Heart left ventricle (tissue), 16 donors: ENCODE measurements at regions of chr20 and their contacts with region 1.

Region 1: GRCh38 chr20:23350196-23350903 is at the start of gene NXT1:
- DNase-seq: peak; percentile 97 to 98 (median 97)
- ATAC-seq: peak; percentile 93 to 96 (median 94)
- H3K4me3 ChIP-seq: peak within 1 kb of the TSS; percentile 63 to 98 (median 90)
- H3K27ac ChIP-seq: peak within 1 kb of the TSS; percentile 93 to 100 (median 98)
- H3K4me1 ChIP-seq: peaks cover 4 to 27% (median 18%) of the 10 kb centered on the region in 12 donors
- H3K27me3 ChIP-seq: no peaks in the 10 kb centered on the region
- CTCF ChIP-seq: no peak
- POLR2A ChIP-seq: peak; percentile 53 to 77
- total RNA-seq, gene NXT1: 4.2 to 13.8 (median 9.1) TPM

Region 2: DNA sequence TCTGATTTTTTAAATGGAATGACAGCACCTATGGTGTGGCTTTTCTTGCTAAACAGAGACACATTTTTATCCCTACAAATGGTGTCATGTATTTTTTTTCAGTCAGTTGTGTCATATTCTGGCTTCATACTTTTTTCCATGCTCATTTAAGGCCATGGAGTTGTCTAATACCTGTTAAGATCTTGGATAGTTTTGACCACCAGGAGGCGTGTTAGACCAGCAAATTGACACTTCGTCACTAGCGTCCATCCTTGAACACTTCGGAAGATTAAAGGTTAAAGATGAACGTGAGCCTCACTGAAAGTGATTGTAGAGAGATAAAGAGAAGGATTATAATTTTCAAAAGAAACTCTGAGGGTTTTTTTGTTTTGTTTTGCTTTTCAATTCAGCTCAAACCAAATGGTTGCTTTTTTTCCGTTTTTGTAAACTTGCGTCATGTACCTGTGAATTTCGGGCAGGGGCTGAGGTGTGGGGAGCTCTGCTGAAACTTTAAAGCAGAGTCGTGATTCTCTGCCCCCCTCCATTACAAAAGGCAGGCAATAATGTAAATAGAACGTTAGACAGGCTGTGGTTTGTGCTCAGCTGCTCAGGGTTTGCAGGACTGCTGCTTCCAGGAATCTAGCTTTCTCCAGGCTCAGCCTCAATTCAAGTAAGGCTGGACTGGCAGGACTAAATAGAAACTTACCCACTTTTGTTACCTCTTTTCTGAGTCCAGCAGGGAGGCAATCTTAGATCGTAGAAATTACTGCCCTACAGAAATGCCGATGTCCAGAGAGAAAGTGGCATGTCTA is 1011.1 kb before region 1 on chr20:
- intact Hi-C with region 1: loop called in 3 of 10 experiments (anchors 5 to 10 kb)
- DNase-seq: peak in 1 of 5 donors; percentile 31
- ATAC-seq: peak in 3 of 4 donors; percentile 34 to 59 (median 55)
- H3K4me3 ChIP-seq: no peak overlapping the region
- H3K27ac ChIP-seq: no peak overlapping the region
- H3K4me1 ChIP-seq: no peaks in the 10 kb centered on the region
- H3K27me3 ChIP-seq: peaks cover 0 to 57% (median 7%) of the 10 kb centered on the region in 9 donors
- CTCF ChIP-seq: peak; percentile 49 to 85 (median 73)
- POLR2A ChIP-seq: no peak

Region 3: DNA sequence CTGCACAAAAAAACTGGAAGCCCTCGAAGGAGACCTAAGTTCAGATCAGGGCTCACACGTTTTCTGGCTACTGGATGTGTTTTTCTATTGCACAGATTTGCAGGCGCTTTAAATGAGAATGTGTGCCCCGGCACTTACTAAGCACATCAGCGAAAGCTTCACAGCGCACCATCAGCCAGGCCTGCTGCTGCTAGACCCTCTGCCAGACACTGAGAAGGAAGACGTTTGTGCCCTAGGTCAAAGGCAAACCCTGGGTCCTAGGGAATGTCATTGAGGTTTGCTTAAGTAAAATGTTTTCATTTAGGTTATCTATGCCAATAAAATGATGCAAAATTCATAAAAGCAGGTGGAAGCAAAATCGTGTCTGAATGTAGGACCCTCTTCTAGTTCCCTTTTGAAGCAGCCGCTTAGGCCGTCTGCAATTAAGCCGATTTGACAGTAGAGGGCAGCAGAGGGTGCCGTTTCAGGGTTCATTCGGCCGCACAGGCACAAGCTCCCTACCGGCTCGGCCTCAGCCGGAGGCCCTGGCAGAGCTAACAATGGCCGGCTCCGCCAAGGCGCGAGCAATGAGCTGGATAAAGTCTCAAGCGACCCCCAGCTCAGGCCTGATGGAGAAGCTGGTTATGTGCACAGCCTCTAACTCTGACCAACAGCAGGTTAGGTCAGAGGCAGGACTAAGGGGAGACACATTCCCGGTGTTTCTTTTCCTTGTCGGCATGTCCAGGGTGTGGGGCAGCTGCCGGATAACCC is 658.8 kb before region 1 on chr20:
- intact Hi-C with region 1: loop called in 3 of 10 experiments (anchors 2 to 5 kb)
- DNase-seq: peak; percentile 79 to 87 (median 84)
- ATAC-seq: peak; percentile 85 to 95 (median 92)
- H3K4me3 ChIP-seq: peak overlapping the region in 6 of 12 donors; percentile 18 to 32 (median 26)
- H3K27ac ChIP-seq: peak overlapping the region in 7 of 12 donors; percentile 16 to 61 (median 31)
- H3K4me1 ChIP-seq: peaks cover 0 to 25% (median 8%) of the 10 kb centered on the region in 12 donors
- H3K27me3 ChIP-seq: no peaks in the 10 kb centered on the region
- CTCF ChIP-seq: peak; percentile 88 to 96 (median 92)
- POLR2A ChIP-seq: no peak

Region 4: DNA sequence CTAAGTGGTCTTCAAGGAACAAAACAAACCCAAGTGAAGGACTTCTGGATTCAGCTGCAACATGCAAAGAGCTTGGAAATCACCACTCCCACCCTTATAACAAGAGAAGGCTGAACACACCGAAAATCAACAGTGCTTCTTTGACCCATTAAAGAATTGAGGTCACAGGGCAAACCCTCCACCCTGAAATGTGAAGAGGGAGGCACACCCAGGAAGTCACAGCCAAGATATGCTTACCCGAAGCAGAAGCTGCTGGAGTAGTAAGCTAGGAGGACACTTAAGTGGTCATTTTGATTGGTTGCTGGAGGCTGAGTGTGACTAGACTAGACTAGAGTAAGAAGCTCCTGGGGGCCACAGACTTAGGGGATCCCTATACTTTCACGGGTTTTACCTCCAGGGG is 503.5 kb before region 1 on chr20:
- intact Hi-C with region 1: loop called in 1 of 10 experiments (anchors 10 kb)
- DNase-seq: no peak
- ATAC-seq: no peak
- H3K4me3 ChIP-seq: no peak overlapping the region
- H3K27ac ChIP-seq: no peak overlapping the region
- H3K4me1 ChIP-seq: peaks cover 0 to 5% (median 0%) of the 10 kb centered on the region in 12 donors
- H3K27me3 ChIP-seq: peaks cover 0 to 7% (median 0%) of the 10 kb centered on the region in 9 donors
- CTCF ChIP-seq: no peak
- POLR2A ChIP-seq: no peak

Region 5: GRCh38 chr20:23245553-23246181 is 104.7 kb before region 1 on chr20:
- intact Hi-C with region 1: loop called in 3 of 10 experiments (anchors 10 kb)
- DNase-seq: peak; percentile 67 to 80 (median 71)
- ATAC-seq: peak; percentile 40 to 83 (median 79)
- H3K4me3 ChIP-seq: no peak overlapping the region
- H3K27ac ChIP-seq: peak overlapping the region in 10 of 12 donors; percentile 23 to 75 (median 66)
- H3K4me1 ChIP-seq: peaks cover 0 to 37% (median 18%) of the 10 kb centered on the region in 12 donors
- H3K27me3 ChIP-seq: no peaks in the 10 kb centered on the region
- CTCF ChIP-seq: peak; percentile 42 to 69 (median 48)
- POLR2A ChIP-seq: no peak

Region 6: GRCh38 chr20:23441850-23442313 is 91.5 kb after region 1 on chr20:
- intact Hi-C with region 1: loop called in 2 of 10 experiments (anchors 10 kb)
- DNase-seq: peak in 4 of 5 donors; percentile 60 to 69 (median 62)
- ATAC-seq: peak; percentile 43 to 83 (median 80)
- H3K4me3 ChIP-seq: no peak overlapping the region
- H3K27ac ChIP-seq: no peak overlapping the region
- H3K4me1 ChIP-seq: peaks cover 0 to under 1% (median 0%) of the 10 kb centered on the region in 12 donors
- H3K27me3 ChIP-seq: no peaks in the 10 kb centered on the region
- CTCF ChIP-seq: peak; percentile 74 to 94 (median 85)
- POLR2A ChIP-seq: no peak